ENCODE measurements at regions of chr5 and their contacts with region 1.

Region 1: GRCh38 chr5:115895821-115896220 is 54.1 kb downstream of the AP3S1 start:
- DNase-seq: peak; percentile 55
- ATAC-seq: peak; percentile 83
- H3K4me3 ChIP-seq: peak overlapping the region; percentile 54; the same call in 1 of the 2 replicates
- H3K27ac ChIP-seq: peak overlapping the region; percentile 59
- H3K4me1 ChIP-seq: peaks cover 14% of the 10 kb centered on the region
- H3K27me3 ChIP-seq: no peaks in the 10 kb centered on the region
- CTCF ChIP-seq: no peak
- POLR2A ChIP-seq: no peak
- RAD21 ChIP-seq: no peak

Region 2: DNA sequence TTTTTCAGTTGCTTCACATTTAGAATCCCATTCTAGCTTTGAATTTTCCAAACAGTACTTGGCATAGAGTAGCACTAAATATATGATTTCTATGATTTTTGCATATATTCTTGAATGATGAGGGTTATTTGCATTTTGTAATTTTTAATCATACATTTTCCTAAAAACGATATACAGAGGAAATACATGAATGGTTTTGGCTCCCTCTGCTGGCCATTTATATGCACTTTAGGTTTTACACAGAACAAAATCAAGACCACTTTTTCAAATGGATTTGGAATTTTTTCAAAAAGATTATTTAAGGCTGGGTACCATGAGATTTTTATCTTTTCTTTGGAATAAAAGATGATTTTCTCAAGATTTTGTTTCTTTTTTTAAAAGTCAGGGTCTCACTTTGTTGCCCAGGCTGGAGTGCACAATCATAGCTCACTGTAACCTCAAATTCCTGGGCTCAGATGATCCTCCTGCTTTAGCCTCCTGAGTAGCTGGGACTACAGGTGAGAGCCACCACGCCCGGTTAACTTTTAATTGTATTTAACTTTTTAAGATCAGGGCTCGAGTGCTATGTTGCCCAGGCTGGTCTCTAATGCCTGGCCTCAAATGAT is 172.3 kb after region 1 on chr5:
- CTCF ChIA-PET with region 1: no interaction called
- POLR2A ChIA-PET with region 1: no interaction called
- dilution Hi-C with region 1: no loop called
- in situ Hi-C with region 1: loop called (anchors 5 kb)
- intact Hi-C with region 1: no loop called
- DNase-seq: peak; percentile 72
- ATAC-seq: peak; percentile 66
- H3K4me3 ChIP-seq: no peak overlapping the region
- H3K27ac ChIP-seq: no peak overlapping the region
- H3K4me1 ChIP-seq: no peaks in the 10 kb centered on the region
- H3K27me3 ChIP-seq: peaks cover 3% of the 10 kb centered on the region; the same call in 1 of the 2 replicates
- CTCF ChIP-seq: peak; percentile 87
- POLR2A ChIP-seq: no peak
- RAD21 ChIP-seq: peak; percentile 82

Region 3: DNA sequence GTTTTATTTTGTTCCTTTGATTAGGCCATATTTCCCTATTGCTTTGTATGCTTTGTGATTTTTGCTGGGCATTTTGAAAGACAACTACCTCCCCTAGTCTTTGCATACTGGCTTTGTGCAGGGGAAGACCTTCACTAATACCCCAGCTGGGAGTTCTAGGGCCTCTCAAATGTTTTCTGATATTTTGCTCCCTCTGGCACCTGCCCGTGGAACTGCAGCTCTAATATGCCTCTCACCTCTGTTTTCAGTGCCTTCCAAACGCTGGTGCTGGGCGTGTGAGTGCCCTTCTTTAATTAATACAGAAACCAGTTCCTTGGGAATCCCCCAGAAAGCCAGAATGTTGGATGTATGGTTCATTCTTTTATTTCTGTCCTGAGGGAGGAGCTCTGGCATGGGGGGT is 393.5 kb after region 1 on chr5:
- CTCF ChIA-PET with region 1: no interaction called
- POLR2A ChIA-PET with region 1: no interaction called
- dilution Hi-C with region 1: no loop called
- in situ Hi-C with region 1: no loop called
- intact Hi-C with region 1: no loop called
- DNase-seq: no peak
- ATAC-seq: no peak
- H3K4me3 ChIP-seq: no peak overlapping the region
- H3K27ac ChIP-seq: no peak overlapping the region
- H3K4me1 ChIP-seq: no peaks in the 10 kb centered on the region; the same call in 1 of the 2 replicates
- H3K27me3 ChIP-seq: no peaks in the 10 kb centered on the region
- CTCF ChIP-seq: no peak
- POLR2A ChIP-seq: no peak
- RAD21 ChIP-seq: no peak

Measured in IMR-90 (cell line).